Activated CD4-positive, alpha-beta T cell treated with anti-CD3 and anti-CD28 coated beads for 36 hours (primary cell): ENCODE measurements at regions of chr4 and their contacts with region 1.

Region 1: DNA sequence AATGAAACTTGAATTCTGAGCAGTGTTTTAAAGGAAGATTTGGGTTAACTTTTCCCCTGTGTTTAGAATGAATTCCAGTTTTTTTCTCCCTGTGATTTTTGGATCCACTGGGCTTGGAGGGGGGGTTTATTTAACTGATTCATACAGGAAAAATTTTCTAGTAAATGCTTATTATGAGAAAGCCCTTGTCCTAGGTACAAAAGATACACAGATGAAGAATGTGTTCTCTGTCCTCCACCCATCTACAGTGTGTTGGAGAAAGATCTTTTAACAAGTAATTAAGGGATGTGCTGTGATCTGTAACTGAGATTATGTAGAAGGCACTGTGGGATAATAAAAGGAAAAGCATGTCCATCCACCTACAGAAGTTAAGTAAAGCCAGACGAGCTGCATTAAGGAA is 103.9 kb downstream of the STIM2 start:
- DNase-seq: no peak
- ATAC-seq: no peak
- H3K4me3 Mint-ChIP-seq: no peak overlapping the region
- H3K27ac Mint-ChIP-seq: no peak overlapping the region
- H3K4me1 Mint-ChIP-seq: peaks cover 58% of the 10 kb centered on the region
- H3K27me3 Mint-ChIP-seq: no peaks in the 10 kb centered on the region

Region 2: DNA sequence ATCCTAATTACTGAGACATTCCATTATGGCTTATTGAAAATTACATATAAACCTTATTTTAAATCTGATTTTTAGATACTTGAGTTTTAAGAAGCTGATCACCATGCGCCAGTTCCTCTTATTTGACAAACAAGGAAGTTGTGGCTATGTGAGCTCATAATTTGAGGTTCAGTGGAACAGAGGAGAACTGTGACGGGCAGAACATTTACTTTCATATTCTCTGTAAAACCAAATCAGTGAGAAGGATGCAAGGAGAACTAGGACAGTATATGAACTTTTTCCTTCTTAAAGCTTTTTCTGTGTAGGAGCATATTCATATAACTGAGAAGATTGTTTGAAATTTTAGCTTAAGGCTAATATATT is 78.6 kb before region 1 on chr4:
- CTCF ChIA-PET with region 1: no interaction called
- POLR2A ChIA-PET with region 1: no interaction called
- intact Hi-C with region 1: loop called (anchors 2 to 5 kb)
- DNase-seq: peak; percentile 29
- ATAC-seq: peak; percentile 63
- H3K4me3 Mint-ChIP-seq: peak overlapping the region; percentile 67
- H3K27ac Mint-ChIP-seq: peak overlapping the region; percentile 92
- H3K4me1 Mint-ChIP-seq: peaks cover 64% of the 10 kb centered on the region
- H3K27me3 Mint-ChIP-seq: no peaks in the 10 kb centered on the region

Region 3: DNA sequence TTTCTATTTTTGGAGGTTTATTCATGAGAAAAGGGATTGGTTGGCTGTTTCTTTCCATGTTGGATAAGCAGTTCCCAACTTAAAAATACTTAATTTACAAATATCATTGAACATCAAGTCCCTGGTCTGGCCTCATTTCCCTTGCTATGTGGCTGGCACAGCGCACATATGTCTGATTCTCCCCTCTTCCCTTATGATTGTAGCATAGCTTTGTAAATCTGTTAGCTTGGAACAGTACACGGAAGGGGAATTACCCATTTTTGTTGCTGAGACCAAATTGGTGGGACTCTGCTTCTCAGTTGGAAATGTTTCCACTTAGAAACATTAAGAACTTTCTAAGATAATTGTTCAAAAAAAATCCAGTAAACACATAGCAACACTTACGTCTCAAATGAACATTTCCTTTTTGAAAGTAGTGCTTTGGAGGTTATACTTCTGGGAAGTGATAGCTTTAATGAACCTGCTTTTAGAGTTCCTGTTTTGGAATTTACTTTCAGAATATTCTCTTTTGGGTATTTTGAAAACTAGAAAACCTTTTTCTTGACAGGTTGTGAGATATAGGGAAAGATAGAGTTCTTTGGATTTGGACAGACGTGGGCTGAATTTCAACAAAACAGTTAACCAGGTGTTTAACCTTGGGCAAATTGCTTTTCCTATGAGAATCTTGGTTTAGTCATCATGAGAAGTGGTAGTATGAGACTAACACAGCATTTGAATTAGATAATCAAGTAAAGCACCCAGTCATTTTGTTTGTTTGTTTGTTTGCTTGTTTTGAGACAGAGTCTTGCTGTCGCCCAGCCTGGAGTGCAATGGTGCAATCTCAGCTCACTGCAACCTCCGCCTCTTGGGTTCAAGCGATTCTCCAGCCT is 56.5 kb before region 1 on chr4:
- CTCF ChIA-PET with region 1: no interaction called
- POLR2A ChIA-PET with region 1: no interaction called
- intact Hi-C with region 1: loop called in 1 of 2 experiments (anchors 5 kb)
- DNase-seq: no peak
- ATAC-seq: peak; percentile 60
- H3K4me3 Mint-ChIP-seq: no peak overlapping the region
- H3K27ac Mint-ChIP-seq: peak overlapping the region; percentile 40
- H3K4me1 Mint-ChIP-seq: peaks cover 66% of the 10 kb centered on the region
- H3K27me3 Mint-ChIP-seq: no peaks in the 10 kb centered on the region

Region 4: DNA sequence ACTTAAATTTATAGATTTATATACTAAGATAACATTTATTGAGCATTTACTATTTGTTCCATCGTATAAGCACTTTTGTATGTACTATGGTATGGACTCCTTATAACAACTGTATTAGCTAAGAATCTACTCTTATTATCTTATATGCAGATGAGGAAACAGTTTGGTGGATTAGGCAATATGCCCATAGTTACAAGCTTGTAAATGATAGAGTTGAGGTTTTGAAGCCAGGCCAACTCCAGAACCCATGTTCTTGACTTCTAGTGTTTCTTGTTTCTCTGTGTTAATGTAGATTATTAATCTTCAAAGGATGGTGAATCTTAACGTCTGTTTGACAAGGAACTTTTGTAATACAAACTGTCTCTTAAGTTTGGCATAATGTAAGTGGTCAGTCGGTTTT is 32.5 kb before region 1 on chr4:
- CTCF ChIA-PET with region 1: no interaction called
- POLR2A ChIA-PET with region 1: no interaction called
- intact Hi-C with region 1: no loop called
- DNase-seq: no peak
- ATAC-seq: no peak
- H3K4me3 Mint-ChIP-seq: no peak overlapping the region
- H3K27ac Mint-ChIP-seq: no peak overlapping the region
- H3K4me1 Mint-ChIP-seq: peaks cover 37% of the 10 kb centered on the region
- H3K27me3 Mint-ChIP-seq: no peaks in the 10 kb centered on the region

Region 5: DNA sequence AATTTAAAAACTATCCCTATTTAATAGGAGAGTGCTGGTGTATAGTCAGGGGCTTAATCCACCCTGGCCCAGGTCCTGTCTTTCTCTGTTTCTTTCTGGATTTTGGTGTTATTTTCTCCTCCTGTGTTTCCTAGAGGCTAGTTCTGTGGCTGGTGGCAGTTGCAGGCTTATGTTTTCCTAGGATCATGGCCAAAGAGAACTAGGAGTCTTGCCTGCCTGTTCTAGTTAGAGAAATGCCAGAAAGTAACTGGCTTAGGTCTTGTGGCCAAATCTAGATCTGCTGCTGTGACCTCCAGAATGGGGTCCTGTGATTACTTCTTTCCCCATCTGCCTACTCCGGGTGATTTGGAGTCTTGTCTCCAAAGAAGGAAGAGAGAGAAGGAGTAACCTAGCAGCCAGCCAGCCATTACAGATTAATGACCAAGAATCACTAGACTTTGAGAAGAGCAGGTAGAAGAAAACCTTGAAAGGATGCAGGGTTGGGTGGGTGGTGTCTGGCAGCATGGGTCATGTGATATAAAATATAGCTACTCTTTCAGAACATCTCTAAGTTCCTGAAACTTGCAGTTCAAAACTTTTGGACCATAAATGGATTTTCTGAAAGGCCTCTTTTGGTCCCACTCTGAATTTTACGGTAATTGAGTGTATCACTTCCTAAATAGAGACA is 14.0 kb after region 1 on chr4:
- CTCF ChIA-PET with region 1: no interaction called
- POLR2A ChIA-PET with region 1: no interaction called
- intact Hi-C with region 1: loop called in 1 of 2 experiments (anchors 2 kb)
- DNase-seq: no peak
- ATAC-seq: no peak
- H3K4me3 Mint-ChIP-seq: no peak overlapping the region
- H3K27ac Mint-ChIP-seq: no peak overlapping the region
- H3K4me1 Mint-ChIP-seq: peaks cover 38% of the 10 kb centered on the region
- H3K27me3 Mint-ChIP-seq: no peaks in the 10 kb centered on the region

Region 6: DNA sequence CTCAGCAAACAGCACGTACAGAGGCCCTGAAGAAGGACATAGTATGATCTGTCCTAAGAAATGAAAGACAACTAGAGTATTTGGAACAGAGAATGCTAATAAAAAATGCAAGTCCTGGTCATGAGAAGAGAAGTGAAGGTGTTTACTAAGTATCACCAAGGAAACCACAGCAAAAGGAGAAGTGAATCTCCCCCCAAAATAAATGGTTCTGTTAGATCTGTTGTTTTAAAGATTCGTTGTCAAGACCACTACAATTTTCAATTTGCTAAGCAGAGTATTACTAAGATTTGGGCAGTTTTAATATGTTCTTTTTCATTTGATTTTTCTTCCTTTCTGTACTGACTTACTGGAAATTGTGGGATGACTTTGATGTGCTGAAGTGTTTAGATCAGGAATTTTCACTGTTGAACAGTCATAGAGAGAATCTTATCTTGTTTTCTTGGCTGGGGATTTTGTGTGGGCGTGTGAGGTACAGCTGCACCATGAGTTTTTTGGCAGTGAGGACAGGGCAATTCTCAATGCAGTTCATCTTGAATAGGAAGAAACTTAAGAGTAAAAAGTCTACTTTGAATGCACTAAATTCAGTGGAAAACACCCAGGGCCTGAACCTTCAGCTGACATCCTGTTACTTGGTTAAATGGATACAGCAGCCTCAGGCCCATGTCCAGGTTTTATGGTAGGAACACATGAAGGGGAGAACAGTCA is 28.3 kb after region 1 on chr4:
- CTCF ChIA-PET with region 1: no interaction called
- POLR2A ChIA-PET with region 1: no interaction called
- intact Hi-C with region 1: loop called (anchors 2 to 5 kb)
- DNase-seq: peak; percentile 53
- ATAC-seq: peak; percentile 59
- H3K4me3 Mint-ChIP-seq: no peak overlapping the region
- H3K27ac Mint-ChIP-seq: no peak overlapping the region
- H3K4me1 Mint-ChIP-seq: peaks cover 23% of the 10 kb centered on the region
- H3K27me3 Mint-ChIP-seq: no peaks in the 10 kb centered on the region